Panc1 (cell line): ENCODE measurements at regions of chr14 and their contacts with region 1.

Region 1: DNA sequence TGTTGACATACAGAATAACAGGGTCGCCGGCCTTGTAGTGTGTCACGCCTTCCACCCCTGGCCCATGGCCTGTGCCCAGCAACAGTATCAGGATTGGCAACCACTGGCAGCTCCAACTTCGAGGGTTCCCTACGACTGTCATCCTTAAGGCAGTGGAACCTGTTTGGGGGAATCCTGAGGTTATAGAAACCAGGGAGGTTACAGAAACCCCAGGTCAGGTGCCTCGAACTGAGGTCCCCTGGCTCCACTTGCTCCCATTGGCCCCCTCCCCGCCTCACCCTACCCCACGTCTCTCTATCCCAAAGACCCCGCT is 407 bp downstream of the TM9SF1 start:
- DNase-seq: no peak
- ATAC-seq: no peak
- H3K4me3 ChIP-seq: peak overlapping the region; percentile 68 to 73
- H3K27ac ChIP-seq: peak overlapping the region; percentile 92
- H3K4me1 ChIP-seq: peaks cover 2% of the 10 kb centered on the region
- H3K27me3 ChIP-seq: no peaks in the 10 kb centered on the region
- CTCF ChIP-seq: no peak

Region 2: GRCh38 chr14:24135834-24136542 is 58.8 kb before region 1 on chr14 and contains the start of gene PSME1:
- CTCF ChIA-PET with region 1: no interaction called
- POLR2A ChIA-PET with region 1: interaction called, 24 read pairs
- in situ Hi-C with region 1: no loop called
- intact Hi-C with region 1: no loop called
- DNase-seq: no peak
- ATAC-seq: peak; percentile 93
- H3K4me3 ChIP-seq: peak within 1 kb of the TSS; percentile 68 to 81
- H3K27ac ChIP-seq: peak within 1 kb of the TSS; percentile 81
- H3K4me1 ChIP-seq: peaks cover 30% of the 10 kb centered on the region
- H3K27me3 ChIP-seq: no peaks in the 10 kb centered on the region
- CTCF ChIP-seq: no peak
- total RNA-seq, gene PSME1: 130 TPM

Region 3: DNA sequence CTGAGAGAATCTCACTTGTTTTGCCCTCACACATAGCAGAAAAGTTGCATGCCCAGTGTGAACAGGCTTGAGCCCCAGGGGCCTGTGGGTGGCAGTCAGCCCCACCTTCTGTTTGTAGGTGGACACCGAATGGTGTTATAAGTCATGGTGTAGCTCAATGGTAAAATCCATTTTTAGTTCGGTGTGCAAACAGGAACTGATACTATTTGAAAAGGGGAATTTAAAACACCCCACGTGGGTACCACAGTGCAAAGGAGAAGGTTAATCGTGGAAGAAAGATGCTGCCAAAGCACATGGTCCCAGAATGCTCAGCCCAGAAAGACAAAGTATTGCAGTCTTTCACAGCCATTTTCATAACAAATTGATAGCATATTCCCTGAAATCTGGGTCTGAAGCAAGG is 511.0 kb after region 1 on chr14:
- CTCF ChIA-PET with region 1: no interaction called
- POLR2A ChIA-PET with region 1: no interaction called
- in situ Hi-C with region 1: no loop called
- intact Hi-C with region 1: no loop called
- DNase-seq: no peak
- ATAC-seq: no peak
- H3K4me3 ChIP-seq: no peak overlapping the region
- H3K27ac ChIP-seq: no peak overlapping the region
- H3K4me1 ChIP-seq: no peaks in the 10 kb centered on the region
- H3K27me3 ChIP-seq: no peaks in the 10 kb centered on the region; the same call in 1 of the 2 replicates
- CTCF ChIP-seq: no peak